CD4-positive, alpha-beta T cell (primary cell): ENCODE measurements at regions of chr5 and their contacts with region 1.

Region 1: GRCh38 chr5:35863159-35863558 is 6.5 kb downstream of the IL7R start:
- DNase-seq: no peak
- ATAC-seq: no peak
- H3K4me3 ChIP-seq: peak overlapping the region; percentile 88
- H3K4me3 Mint-ChIP-seq: peak overlapping the region; percentile 93
- H3K27ac ChIP-seq: peak overlapping the region; percentile 43 to 63
- H3K27ac Mint-ChIP-seq: peak overlapping the region; percentile 99
- H3K4me1 ChIP-seq: peaks cover 18% of the 10 kb centered on the region
- H3K4me1 Mint-ChIP-seq: peaks cover 83% of the 10 kb centered on the region
- H3K27me3 ChIP-seq: no peaks in the 10 kb centered on the region
- H3K27me3 Mint-ChIP-seq: no peaks in the 10 kb centered on the region
- CTCF ChIP-seq: no peak

Region 2: DNA sequence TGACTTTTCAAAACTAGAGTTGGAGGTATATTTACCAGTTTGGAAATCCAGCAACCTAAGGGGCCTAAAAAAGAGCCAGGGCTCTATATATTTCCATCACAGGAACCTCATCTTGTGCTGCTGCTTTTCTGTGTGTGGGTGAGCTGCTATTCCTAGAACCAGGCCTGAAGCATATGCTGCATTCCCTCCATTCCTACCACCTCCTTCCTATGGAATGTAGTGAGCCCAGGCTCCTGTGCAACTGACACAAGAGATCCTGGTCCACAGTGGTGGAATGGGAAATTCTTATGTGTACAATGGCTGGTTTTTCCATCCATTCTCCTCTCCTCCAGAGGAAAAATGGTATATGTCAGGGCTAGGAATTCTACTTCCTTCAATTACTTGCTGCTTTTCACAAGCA is 206.4 kb before region 1 on chr5:
- CTCF ChIA-PET with region 1: interaction called, 13 read pairs
- POLR2A ChIA-PET with region 1: interaction called, 64 read pairs
- intact Hi-C with region 1: loop called (anchors 2 to 5 kb)
- DNase-seq: no peak
- ATAC-seq: no peak
- H3K4me3 ChIP-seq: no peak overlapping the region
- H3K4me3 Mint-ChIP-seq: no peak overlapping the region
- H3K27ac ChIP-seq: no peak overlapping the region
- H3K27ac Mint-ChIP-seq: no peak overlapping the region
- H3K4me1 ChIP-seq: no peaks in the 10 kb centered on the region
- H3K4me1 Mint-ChIP-seq: peaks cover 31% of the 10 kb centered on the region
- H3K27me3 ChIP-seq: no peaks in the 10 kb centered on the region
- H3K27me3 Mint-ChIP-seq: no peaks in the 10 kb centered on the region
- CTCF ChIP-seq: no peak

Region 3: GRCh38 chr5:35815089-35815936 is 47.8 kb before region 1 on chr5:
- CTCF ChIA-PET with region 1: interaction called, 3 read pairs
- POLR2A ChIA-PET with region 1: interaction called, 576 read pairs
- intact Hi-C with region 1: loop called in 1 of 2 experiments (anchors 2 kb)
- DNase-seq: peak in 4 of 14 experiments; percentile 47 to 75 (median 69)
- ATAC-seq: peak; percentile 27
- H3K4me3 ChIP-seq: no peak overlapping the region
- H3K4me3 Mint-ChIP-seq: no peak overlapping the region
- H3K27ac ChIP-seq: peak overlapping the region; percentile 8 to 59
- H3K27ac Mint-ChIP-seq: no peak overlapping the region
- H3K4me1 ChIP-seq: peaks cover 65% of the 10 kb centered on the region
- H3K4me1 Mint-ChIP-seq: peaks cover 39% of the 10 kb centered on the region
- H3K27me3 ChIP-seq: no peaks in the 10 kb centered on the region
- H3K27me3 Mint-ChIP-seq: no peaks in the 10 kb centered on the region
- CTCF ChIP-seq: peak; percentile 64

Region 4: DNA sequence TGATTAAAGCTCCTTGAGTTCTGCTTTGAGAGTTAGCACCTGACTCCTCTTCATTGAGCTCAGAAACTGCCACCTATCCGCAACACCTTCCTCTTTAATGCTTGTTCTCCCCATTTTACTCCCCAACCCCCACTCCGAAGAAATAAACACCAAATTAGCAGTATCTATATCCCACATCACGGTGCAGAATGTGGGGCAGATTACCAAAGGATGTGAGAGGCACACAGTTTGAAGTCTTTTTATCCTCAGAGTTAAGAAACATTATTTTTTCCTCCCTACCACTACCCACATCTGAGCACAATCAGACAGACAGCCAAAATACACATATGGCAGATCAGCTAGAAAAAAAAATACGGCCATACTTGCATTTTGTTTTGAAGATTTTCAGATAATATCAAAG is 32.6 kb before region 1 on chr5:
- CTCF ChIA-PET with region 1: interaction called, 3 read pairs
- POLR2A ChIA-PET with region 1: interaction called, 576 read pairs
- intact Hi-C with region 1: no loop called
- DNase-seq: peak in 6 of 14 experiments; percentile 43 to 85 (median 71)
- ATAC-seq: peak; percentile 87
- H3K4me3 ChIP-seq: peak overlapping the region; percentile 10
- H3K4me3 Mint-ChIP-seq: peak overlapping the region; percentile 60
- H3K27ac ChIP-seq: peak overlapping the region; percentile 42 to 45
- H3K27ac Mint-ChIP-seq: peak overlapping the region; percentile 87
- H3K4me1 ChIP-seq: peaks cover 61% of the 10 kb centered on the region
- H3K4me1 Mint-ChIP-seq: peaks cover 95% of the 10 kb centered on the region
- H3K27me3 ChIP-seq: no peaks in the 10 kb centered on the region
- H3K27me3 Mint-ChIP-seq: no peaks in the 10 kb centered on the region
- CTCF ChIP-seq: no peak

Region 5: DNA sequence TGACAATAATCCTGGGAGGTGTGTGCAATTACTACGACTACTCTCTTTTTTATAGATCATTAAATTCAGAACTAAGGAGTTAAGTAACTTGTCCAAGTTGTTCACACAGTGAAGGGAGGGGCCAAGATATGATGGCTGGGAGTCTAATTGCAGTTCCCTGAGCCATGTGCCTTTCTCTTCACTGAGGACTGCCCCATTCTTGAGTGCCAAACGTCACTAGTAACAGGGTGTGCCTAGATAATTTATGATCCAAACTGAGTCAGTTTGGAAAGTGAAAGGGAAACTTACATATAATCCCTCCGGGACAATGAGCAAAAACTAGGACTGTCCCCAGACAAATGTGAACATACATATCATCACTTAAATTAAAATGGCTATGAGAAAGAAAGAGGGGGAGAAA is 13.8 kb after region 1 on chr5:
- CTCF ChIA-PET with region 1: interaction called, 4 read pairs
- POLR2A ChIA-PET with region 1: interaction called, 278 read pairs
- intact Hi-C with region 1: loop called in 1 of 2 experiments (anchors 2 kb)
- DNase-seq: no peak
- ATAC-seq: no peak
- H3K4me3 ChIP-seq: no peak overlapping the region
- H3K4me3 Mint-ChIP-seq: peak overlapping the region; percentile 47
- H3K27ac ChIP-seq: peak overlapping the region in 1 of 2 donors; percentile 32
- H3K27ac Mint-ChIP-seq: peak overlapping the region; percentile 85
- H3K4me1 ChIP-seq: peaks cover 46% of the 10 kb centered on the region
- H3K4me1 Mint-ChIP-seq: peaks cover 95% of the 10 kb centered on the region
- H3K27me3 ChIP-seq: no peaks in the 10 kb centered on the region
- H3K27me3 Mint-ChIP-seq: no peaks in the 10 kb centered on the region
- CTCF ChIP-seq: no peak